SK-N-SH (cell line): ENCODE measurements at regions of chr12 and their contacts with region 1.

Region 1: GRCh38 chr12:57175428-57176138 is 28.2 kb upstream of the LRP1-AS start:
- DNase-seq: peak; percentile 92
- H3K4me3 ChIP-seq: no peak overlapping the region; a peak in 1 of 4 replicates
- H3K27ac ChIP-seq: peak overlapping the region in 1 of 2 experiments; percentile 67; a peak in 2 of 4 replicates
- H3K4me1 ChIP-seq: peaks cover 0 to 16% of the 10 kb centered on the region in 2 experiments; a peak in 1 of 4 replicates
- H3K27me3 ChIP-seq: no peaks in the 10 kb centered on the region
- CTCF ChIP-seq: peak; percentile 88
- EP300 ChIP-seq: no peak
- RAD21 ChIP-seq: peak; percentile 79

Region 2: DNA sequence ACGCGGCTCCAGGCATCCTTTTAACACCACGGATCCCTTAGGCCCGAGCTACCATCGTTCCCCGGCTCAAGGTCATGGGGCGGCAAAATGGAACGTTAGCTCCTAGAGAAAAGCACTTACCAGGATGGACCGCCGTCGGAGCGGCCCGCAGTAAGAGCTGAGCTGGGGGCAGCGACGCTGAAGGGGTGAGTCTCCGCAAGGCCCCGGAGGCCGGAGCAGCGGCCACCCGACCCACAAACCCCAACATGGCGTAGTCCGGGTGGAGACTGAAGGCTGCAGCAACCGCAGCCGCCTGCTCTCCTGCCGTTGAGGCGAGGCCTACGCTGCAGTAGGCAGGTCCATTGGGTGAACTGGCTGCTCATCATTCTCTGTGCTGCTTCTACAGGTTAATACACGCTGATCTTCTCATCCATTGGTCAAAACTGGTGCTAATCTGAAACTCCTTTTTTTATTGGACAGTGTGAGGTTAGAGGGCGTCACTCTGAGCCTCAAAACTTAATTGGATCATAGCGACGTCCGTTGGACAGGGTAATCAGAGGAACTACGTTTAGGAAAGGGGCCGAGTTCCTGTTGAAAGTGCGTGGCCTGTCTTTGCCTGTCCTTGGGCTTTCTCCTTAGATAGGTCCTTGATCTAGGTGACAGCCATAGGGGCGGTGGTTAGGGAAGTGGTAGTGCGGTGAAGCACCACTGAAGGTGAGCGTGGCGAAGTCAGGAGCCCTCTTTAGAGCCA is 529.7 kb before region 1 on chr12 and contains the start of gene ATP5F1B:
- CTCF ChIA-PET with region 1: no interaction called
- POLR2A ChIA-PET with region 1: no interaction called
- DNase-seq: peak; percentile 95
- H3K4me3 ChIP-seq: peak within 1 kb of the TSS; percentile 81 to 89
- H3K27ac ChIP-seq: peak within 1 kb of the TSS; percentile 83 to 90
- H3K4me1 ChIP-seq: peaks cover 6 to 11% of the 10 kb centered on the region in 2 experiments; a peak in 2 of 4 replicates
- H3K27me3 ChIP-seq: no peaks in the 10 kb centered on the region
- CTCF ChIP-seq: no peak
- EP300 ChIP-seq: no peak
- RAD21 ChIP-seq: no peak
- polyA plus RNA-seq, gene ATP5F1B: 762 and 917 TPM in 2 replicates

Region 3: DNA sequence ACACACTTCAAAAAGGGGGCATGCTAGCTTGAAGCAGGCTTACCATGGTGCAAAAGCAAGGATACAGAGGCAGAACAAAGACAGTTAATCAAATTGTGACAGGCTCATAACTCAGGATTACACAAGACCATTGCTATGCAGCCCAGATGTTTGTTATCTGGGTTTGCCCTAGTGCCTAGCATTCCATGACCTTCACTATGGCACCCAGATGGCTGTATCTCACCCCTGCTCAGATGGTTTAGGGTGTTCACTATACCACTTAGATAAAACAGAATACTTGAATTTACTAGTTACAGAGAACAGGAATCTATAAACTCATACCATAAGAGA is 297.6 kb before region 1 on chr12:
- CTCF ChIA-PET with region 1: no interaction called
- POLR2A ChIA-PET with region 1: no interaction called
- DNase-seq: no peak
- H3K4me3 ChIP-seq: no peak overlapping the region
- H3K27ac ChIP-seq: no peak overlapping the region
- H3K4me1 ChIP-seq: no peaks in the 10 kb centered on the region
- H3K27me3 ChIP-seq: no peaks in the 10 kb centered on the region
- CTCF ChIP-seq: no peak
- EP300 ChIP-seq: no peak
- RAD21 ChIP-seq: no peak

Region 4: GRCh38 chr12:57078519-57079404 is 96.8 kb before region 1 on chr12 and contains the start of gene NEMP1:
- CTCF ChIA-PET with region 1: interaction called, 14 read pairs
- POLR2A ChIA-PET with region 1: interaction called, 3 read pairs
- DNase-seq: peak; percentile 95
- H3K4me3 ChIP-seq: peak within 1 kb of the TSS; percentile 67 to 93
- H3K27ac ChIP-seq: peak within 1 kb of the TSS; percentile 77 to 79
- H3K4me1 ChIP-seq: peaks cover 0 to 4% of the 10 kb centered on the region in 2 experiments; a peak in 2 of 4 replicates
- H3K27me3 ChIP-seq: no peaks in the 10 kb centered on the region
- CTCF ChIP-seq: no peak
- EP300 ChIP-seq: no peak; a peak in 1 of 4 replicates
- RAD21 ChIP-seq: no peak
- polyA plus RNA-seq, gene NEMP1: 6.2 and 8.8 TPM in 2 replicates

Region 5: GRCh38 chr12:57088459-57089248 is 86.9 kb before region 1 on chr12 and contains the start of gene NAB2:
- CTCF ChIA-PET with region 1: interaction called, 16 read pairs
- POLR2A ChIA-PET with region 1: no interaction called
- DNase-seq: peak; percentile 96
- H3K4me3 ChIP-seq: peak within 1 kb of the TSS; percentile 77 to 90
- H3K27ac ChIP-seq: peak within 1 kb of the TSS; percentile 96 to 98
- H3K4me1 ChIP-seq: peaks cover 22 to 23% of the 10 kb centered on the region in 2 experiments; a peak in 2 of 4 replicates
- H3K27me3 ChIP-seq: no peaks in the 10 kb centered on the region
- CTCF ChIP-seq: no peak
- EP300 ChIP-seq: no peak
- RAD21 ChIP-seq: no peak
- polyA plus RNA-seq, gene NAB2: 23.7 and 24.9 TPM in 2 replicates

Region 6: DNA sequence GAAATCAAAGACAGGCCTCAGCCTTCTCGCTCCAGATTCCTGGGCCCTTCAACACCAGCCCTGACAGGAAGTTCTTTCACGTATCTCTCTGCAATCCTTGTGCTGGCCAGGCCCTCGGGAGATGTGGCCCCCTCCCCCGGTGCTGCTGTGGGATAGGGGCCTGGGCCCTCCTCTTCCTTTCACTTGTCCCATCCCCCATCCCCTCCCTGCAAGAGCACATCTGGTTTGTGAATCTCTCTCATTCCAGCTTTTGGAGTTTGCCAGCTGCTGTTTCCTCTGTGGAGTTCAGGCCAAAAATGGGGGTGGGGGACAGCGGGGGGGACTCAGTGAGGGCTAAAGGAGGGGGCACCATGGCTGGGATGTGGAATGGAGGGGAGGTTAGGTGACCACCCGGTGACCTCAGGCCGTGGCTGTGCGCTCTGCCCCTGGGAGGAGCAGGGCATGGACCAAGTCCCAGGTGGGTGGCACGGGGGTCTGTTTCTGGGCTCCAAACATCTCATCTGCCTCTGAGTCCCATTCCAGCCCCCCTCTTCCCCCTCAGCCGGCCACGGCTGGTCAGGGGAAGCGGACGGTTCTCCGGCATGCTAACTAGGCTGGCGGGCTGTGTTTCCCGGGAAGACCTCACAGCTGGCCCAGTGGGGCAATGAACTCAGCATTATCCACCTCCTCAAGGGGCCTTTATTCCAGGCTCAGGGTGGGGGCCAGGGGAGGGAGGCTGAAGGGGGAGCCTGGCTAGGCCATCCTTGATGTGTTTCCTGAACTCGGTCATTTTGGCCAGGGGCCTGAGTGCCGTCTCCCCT is 39.9 kb before region 1 on chr12:
- CTCF ChIA-PET with region 1: interaction called, 643 read pairs
- POLR2A ChIA-PET with region 1: interaction called, 7 read pairs
- DNase-seq: peak; percentile 78
- H3K4me3 ChIP-seq: no peak overlapping the region
- H3K27ac ChIP-seq: peak overlapping the region in 1 of 2 experiments; percentile 73; a peak in 2 of 4 replicates
- H3K4me1 ChIP-seq: peaks cover 36 to 51% of the 10 kb centered on the region in 2 experiments
- H3K27me3 ChIP-seq: no peaks in the 10 kb centered on the region
- CTCF ChIP-seq: no peak
- EP300 ChIP-seq: no peak; a peak in 1 of 4 replicates
- RAD21 ChIP-seq: no peak

Region 7: DNA sequence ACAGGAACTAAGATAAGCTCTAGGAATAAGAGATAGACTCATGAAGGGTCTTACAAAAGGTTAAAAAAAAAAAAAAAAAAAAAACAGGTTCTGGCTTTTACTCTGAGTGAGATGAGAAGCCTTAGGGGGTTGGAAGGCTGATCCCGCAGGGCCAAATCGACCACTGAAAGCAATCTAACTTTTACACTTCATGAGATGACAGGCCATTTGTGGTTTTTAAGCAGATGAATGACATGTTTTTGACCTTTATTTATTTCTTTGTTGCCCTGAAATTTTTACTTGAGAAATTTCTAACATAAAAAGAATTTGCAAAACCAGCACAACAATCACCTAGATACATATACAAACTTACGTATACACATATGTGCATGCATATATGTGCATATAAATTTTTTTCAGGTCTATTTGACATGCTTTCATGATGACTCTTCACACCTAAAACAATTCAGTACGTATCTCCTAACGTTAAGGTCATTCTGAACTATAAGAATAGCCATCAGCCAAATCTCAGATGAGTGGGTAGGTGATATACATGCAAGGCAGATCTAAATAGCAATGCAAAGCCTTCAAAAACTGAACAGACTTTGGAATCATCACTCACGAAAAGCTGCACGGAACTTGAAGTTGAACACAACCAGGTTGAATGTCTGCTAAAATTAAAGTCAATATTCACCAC is 168.3 kb after region 1 on chr12:
- CTCF ChIA-PET with region 1: no interaction called
- POLR2A ChIA-PET with region 1: no interaction called
- DNase-seq: no peak
- H3K4me3 ChIP-seq: no peak overlapping the region
- H3K27ac ChIP-seq: no peak overlapping the region
- H3K4me1 ChIP-seq: peaks cover 2 to 13% of the 10 kb centered on the region in 2 experiments; a peak in 2 of 4 replicates
- H3K27me3 ChIP-seq: no peaks in the 10 kb centered on the region
- CTCF ChIP-seq: no peak
- EP300 ChIP-seq: no peak
- RAD21 ChIP-seq: no peak

Region 8: GRCh38 chr12:57401165-57401564 is 225.6 kb after region 1 on chr12:
- CTCF ChIA-PET with region 1: no interaction called
- POLR2A ChIA-PET with region 1: no interaction called
- DNase-seq: no peak
- H3K4me3 ChIP-seq: no peak overlapping the region
- H3K27ac ChIP-seq: no peak overlapping the region
- H3K4me1 ChIP-seq: no peaks in the 10 kb centered on the region
- H3K27me3 ChIP-seq: no peaks in the 10 kb centered on the region
- CTCF ChIP-seq: no peak
- EP300 ChIP-seq: no peak
- RAD21 ChIP-seq: no peak